GM10248 (cell line): ENCODE measurements at regions of chr3 and their contacts with region 1.

Region 1: DNA sequence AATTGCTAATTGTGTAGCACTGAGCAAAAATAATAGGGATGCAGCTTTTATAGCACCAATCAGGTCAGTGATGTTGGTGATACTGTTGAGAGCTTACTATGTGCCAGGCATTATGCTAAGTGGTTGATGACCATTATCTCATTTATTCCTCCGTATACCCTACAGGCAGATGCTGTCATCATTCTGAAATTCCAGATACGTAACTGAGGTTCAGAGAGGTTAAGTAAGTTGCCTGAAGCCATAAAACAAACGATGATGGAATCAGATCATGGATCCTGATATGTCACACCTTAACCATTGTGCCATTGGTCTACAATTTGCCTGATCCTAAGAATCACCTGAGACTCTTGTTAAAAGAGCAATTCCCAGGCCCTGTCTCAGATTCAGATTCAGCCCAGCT is 49.5 kb downstream of the ST6GAL1 start:
- DNase-seq: no peak
- CTCF ChIP-seq: no peak

Region 2: GRCh38 chr3:186967686-186968085 is 12.2 kb before region 1 on chr3:
- CTCF ChIA-PET with region 1: interaction called, 16 read pairs
- POLR2A ChIA-PET with region 1: no interaction called
- DNase-seq: no peak
- CTCF ChIP-seq: no peak